ENCODE measurements at regions of chr4 and their contacts with region 1.

Region 1: DNA sequence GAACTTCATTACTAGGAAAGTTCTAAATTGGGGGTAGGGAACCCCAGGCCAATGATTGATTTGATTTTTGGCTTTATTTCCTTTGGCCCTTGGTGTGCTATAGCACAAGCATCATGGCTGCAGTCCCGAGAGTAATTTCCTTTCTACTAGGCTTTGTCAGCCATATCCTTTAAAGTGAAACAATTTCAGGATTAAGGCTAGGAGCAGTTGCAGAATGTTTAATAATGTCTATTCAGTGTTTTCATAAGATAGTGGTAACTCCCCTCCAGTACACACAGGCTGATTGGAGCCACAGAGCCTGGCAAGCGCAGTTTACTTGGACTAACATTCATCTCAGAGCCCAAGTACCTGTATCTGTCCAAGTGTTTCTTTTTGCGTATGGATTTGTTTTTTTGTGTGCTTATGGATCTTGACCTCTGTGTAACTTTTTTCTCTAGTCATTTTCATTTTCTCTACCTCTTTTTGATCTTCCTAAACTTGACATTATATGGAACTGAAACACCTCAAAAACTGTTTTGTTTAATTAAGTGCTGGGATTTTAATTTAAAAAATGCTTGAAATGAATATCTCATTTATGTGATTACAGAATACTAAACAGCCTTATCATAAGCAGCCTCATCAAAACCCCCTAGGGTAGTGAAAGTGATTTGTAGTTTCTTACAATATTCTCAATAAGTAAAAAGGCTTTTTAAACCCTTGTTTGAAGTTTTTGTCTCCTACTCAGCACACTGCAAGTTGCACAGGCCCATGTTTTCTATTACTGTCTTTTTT is 7.5 kb downstream of the STIM2 start:
- DNase-seq: no peak
- ATAC-seq: peak in 6 of 8 donors; percentile 25 to 66 (median 60)
- H3K4me3 ChIP-seq: peak overlapping the region in 1 of 10 donors; percentile 18
- H3K27ac ChIP-seq: peak overlapping the region in 7 of 10 donors; percentile 13 to 73 (median 30)
- H3K4me1 ChIP-seq: peaks cover 0 to 76% (median 43%) of the 10 kb centered on the region in 9 donors
- H3K27me3 ChIP-seq: no peaks in the 10 kb centered on the region
- CTCF ChIP-seq: no peak

Region 2: GRCh38 chr4:26619784-26620183 is 248.3 kb before region 1 on chr4:
- intact Hi-C with region 1: no loop called
- DNase-seq: no peak
- ATAC-seq: no peak
- H3K4me3 ChIP-seq: no peak overlapping the region
- H3K27ac ChIP-seq: no peak overlapping the region
- H3K4me1 ChIP-seq: no peaks in the 10 kb centered on the region
- H3K27me3 ChIP-seq: no peaks in the 10 kb centered on the region
- CTCF ChIP-seq: no peak

Region 3: GRCh38 chr4:26899991-26900390 is 31.9 kb after region 1 on chr4:
- intact Hi-C with region 1: loop called in 2 of 10 experiments (anchors 5 kb)
- DNase-seq: no peak
- ATAC-seq: peak in 5 of 8 donors; percentile 25 to 62 (median 59)
- H3K4me3 ChIP-seq: no peak overlapping the region
- H3K27ac ChIP-seq: peak overlapping the region in 3 of 10 donors; percentile 4 to 61 (median 34)
- H3K4me1 ChIP-seq: peaks cover 0 to 45% (median 22%) of the 10 kb centered on the region in 9 donors
- H3K27me3 ChIP-seq: no peaks in the 10 kb centered on the region
- CTCF ChIP-seq: no peak

Region 4: DNA sequence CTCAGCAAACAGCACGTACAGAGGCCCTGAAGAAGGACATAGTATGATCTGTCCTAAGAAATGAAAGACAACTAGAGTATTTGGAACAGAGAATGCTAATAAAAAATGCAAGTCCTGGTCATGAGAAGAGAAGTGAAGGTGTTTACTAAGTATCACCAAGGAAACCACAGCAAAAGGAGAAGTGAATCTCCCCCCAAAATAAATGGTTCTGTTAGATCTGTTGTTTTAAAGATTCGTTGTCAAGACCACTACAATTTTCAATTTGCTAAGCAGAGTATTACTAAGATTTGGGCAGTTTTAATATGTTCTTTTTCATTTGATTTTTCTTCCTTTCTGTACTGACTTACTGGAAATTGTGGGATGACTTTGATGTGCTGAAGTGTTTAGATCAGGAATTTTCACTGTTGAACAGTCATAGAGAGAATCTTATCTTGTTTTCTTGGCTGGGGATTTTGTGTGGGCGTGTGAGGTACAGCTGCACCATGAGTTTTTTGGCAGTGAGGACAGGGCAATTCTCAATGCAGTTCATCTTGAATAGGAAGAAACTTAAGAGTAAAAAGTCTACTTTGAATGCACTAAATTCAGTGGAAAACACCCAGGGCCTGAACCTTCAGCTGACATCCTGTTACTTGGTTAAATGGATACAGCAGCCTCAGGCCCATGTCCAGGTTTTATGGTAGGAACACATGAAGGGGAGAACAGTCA is 124.7 kb after region 1 on chr4:
- intact Hi-C with region 1: loop called in 5 of 10 experiments (anchors 5 to 10 kb)
- DNase-seq: peak in 1 of 2 donors; percentile 75
- ATAC-seq: peak; percentile 75 to 91 (median 87)
- H3K4me3 ChIP-seq: no peak overlapping the region
- H3K27ac ChIP-seq: peak overlapping the region in 6 of 10 donors; percentile 5 to 64 (median 35)
- H3K4me1 ChIP-seq: peaks cover 5 to 39% (median 30%) of the 10 kb centered on the region in 9 donors
- H3K27me3 ChIP-seq: no peaks in the 10 kb centered on the region
- CTCF ChIP-seq: no peak

Region 5: GRCh38 chr4:27270435-27270834 is 402.3 kb after region 1 on chr4:
- intact Hi-C with region 1: no loop called
- DNase-seq: no peak
- ATAC-seq: no peak
- H3K4me3 ChIP-seq: no peak overlapping the region
- H3K27ac ChIP-seq: no peak overlapping the region
- H3K4me1 ChIP-seq: no peaks in the 10 kb centered on the region
- H3K27me3 ChIP-seq: peaks cover 0 to 8% (median 0%) of the 10 kb centered on the region in 7 donors
- CTCF ChIP-seq: no peak

Measured in heart right ventricle (tissue), 16 donors.